ENCODE measurements at regions of chr6 and their contacts with region 1.

Region 1: GRCh38 chr6:118574051-118574865 is 26.2 kb downstream of the PLN start:
- DNase-seq: no peak
- ATAC-seq: no peak
- H3K4me3 ChIP-seq: no peak overlapping the region
- H3K27ac ChIP-seq: no peak overlapping the region
- H3K4me1 ChIP-seq: peaks cover 0 to 5% (median 0%) of the 10 kb centered on the region in 12 donors
- H3K27me3 ChIP-seq: no peaks in the 10 kb centered on the region
- CTCF ChIP-seq: no peak
- POLR2A ChIP-seq: no peak

Region 2: GRCh38 chr6:117960877-117961276 is 613.4 kb before region 1 on chr6:
- intact Hi-C with region 1: loop called in 1 of 10 experiments (anchors 10 kb)
- DNase-seq: no peak
- ATAC-seq: no peak
- H3K4me3 ChIP-seq: no peak overlapping the region
- H3K27ac ChIP-seq: no peak overlapping the region
- H3K4me1 ChIP-seq: no peaks in the 10 kb centered on the region
- H3K27me3 ChIP-seq: peaks cover 0 to 5% (median 0%) of the 10 kb centered on the region in 9 donors
- CTCF ChIP-seq: no peak
- POLR2A ChIP-seq: no peak

Region 3: GRCh38 chr6:118307581-118307980 is 266.7 kb before region 1 on chr6:
- intact Hi-C with region 1: no loop called
- DNase-seq: peak in 4 of 5 donors; percentile 28 to 82 (median 56)
- ATAC-seq: peak; percentile 76 to 88 (median 82)
- H3K4me3 ChIP-seq: no peak overlapping the region
- H3K27ac ChIP-seq: peak overlapping the region; percentile 38 to 78 (median 67)
- H3K4me1 ChIP-seq: peaks cover 0 to 46% (median 16%) of the 10 kb centered on the region in 12 donors
- H3K27me3 ChIP-seq: no peaks in the 10 kb centered on the region
- CTCF ChIP-seq: no peak
- POLR2A ChIP-seq: no peak